Vagina (tissue), 2 donors: ENCODE measurements at regions of chr9 and their contacts with region 1.

Region 1: GRCh38 chr9:86948074-86948929 is 996 bp upstream of the GAS1 start:
- DNase-seq: no peak
- H3K4me3 ChIP-seq: peak overlapping the region; percentile 81 to 90
- H3K27ac ChIP-seq: peak overlapping the region; percentile 90
- H3K4me1 ChIP-seq: peaks cover 20% of the 10 kb centered on the region
- H3K27me3 ChIP-seq: no peaks in the 10 kb centered on the region
- CTCF ChIP-seq: peak in 2 of 3 experiments; percentile 46 to 79
- POLR2A ChIP-seq: no peak

Region 2: GRCh38 chr9:85662573-85662972 is 1285.7 kb before region 1 on chr9:
- intact Hi-C with region 1: no loop called
- DNase-seq: no peak
- H3K4me3 ChIP-seq: no peak overlapping the region
- H3K27ac ChIP-seq: no peak overlapping the region
- H3K4me1 ChIP-seq: no peaks in the 10 kb centered on the region
- H3K27me3 ChIP-seq: no peaks in the 10 kb centered on the region
- CTCF ChIP-seq: no peak
- POLR2A ChIP-seq: no peak

Region 3: GRCh38 chr9:86486891-86487837 is 461.1 kb before region 1 on chr9:
- intact Hi-C with region 1: loop called (anchors 10 kb)
- DNase-seq: no peak
- H3K4me3 ChIP-seq: no peak overlapping the region
- H3K27ac ChIP-seq: no peak overlapping the region
- H3K4me1 ChIP-seq: peaks cover 5% of the 10 kb centered on the region
- H3K27me3 ChIP-seq: no peaks in the 10 kb centered on the region
- CTCF ChIP-seq: peak; percentile 49 to 67 (median 60)
- POLR2A ChIP-seq: no peak

Region 4: DNA sequence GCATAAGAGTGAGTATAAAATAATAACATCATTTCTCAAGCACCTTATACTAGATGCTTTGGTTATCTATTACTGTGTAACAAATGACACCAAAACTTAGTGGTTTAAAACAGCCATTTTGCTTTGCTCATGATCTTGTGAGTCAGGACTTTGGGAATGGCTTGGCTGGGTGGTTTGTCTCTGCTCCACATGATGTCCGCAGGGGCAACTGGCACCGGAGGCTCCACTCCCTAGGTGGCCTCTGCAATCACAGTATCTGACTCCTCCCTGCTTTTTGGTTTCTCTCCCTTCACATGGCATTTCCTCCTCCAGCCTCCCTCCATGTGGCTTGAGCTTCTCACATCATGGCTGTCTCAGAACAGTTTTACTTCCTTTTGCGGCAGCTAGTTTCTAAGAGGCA is 260.5 kb before region 1 on chr9:
- intact Hi-C with region 1: no loop called
- DNase-seq: no peak
- H3K4me3 ChIP-seq: no peak overlapping the region
- H3K27ac ChIP-seq: no peak overlapping the region
- H3K4me1 ChIP-seq: peaks cover 7% of the 10 kb centered on the region
- H3K27me3 ChIP-seq: no peaks in the 10 kb centered on the region
- CTCF ChIP-seq: no peak
- POLR2A ChIP-seq: no peak

Region 5: GRCh38 chr9:86732514-86733171 is 215.7 kb before region 1 on chr9:
- intact Hi-C with region 1: loop called (anchors 5 kb)
- DNase-seq: peak in 1 of 2 donors; percentile 94
- H3K4me3 ChIP-seq: no peak overlapping the region
- H3K27ac ChIP-seq: peak overlapping the region; percentile 51
- H3K4me1 ChIP-seq: peaks cover 30% of the 10 kb centered on the region
- H3K27me3 ChIP-seq: no peaks in the 10 kb centered on the region
- CTCF ChIP-seq: no peak
- POLR2A ChIP-seq: no peak

Region 6: DNA sequence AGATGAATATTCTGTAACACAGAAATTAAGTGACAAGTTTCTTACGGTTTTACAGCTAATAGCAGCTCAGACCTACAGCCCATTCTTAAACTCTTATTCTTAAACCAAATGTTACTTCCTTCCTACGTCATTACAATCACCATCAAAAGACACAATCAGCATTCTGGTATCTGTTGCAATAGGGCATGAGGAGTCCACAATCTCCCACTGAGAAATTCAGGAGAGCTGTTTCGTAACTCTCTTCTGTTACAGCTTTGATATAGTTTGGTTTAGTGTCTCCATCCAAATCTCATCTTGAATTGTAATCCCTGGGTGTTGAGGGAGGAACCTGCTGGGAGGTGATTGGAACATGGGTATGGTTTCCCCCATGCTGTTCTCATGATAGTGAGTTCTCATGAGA is 164.4 kb before region 1 on chr9:
- intact Hi-C with region 1: no loop called
- DNase-seq: no peak
- H3K4me3 ChIP-seq: no peak overlapping the region
- H3K27ac ChIP-seq: no peak overlapping the region
- H3K4me1 ChIP-seq: no peaks in the 10 kb centered on the region
- H3K27me3 ChIP-seq: no peaks in the 10 kb centered on the region
- CTCF ChIP-seq: no peak
- POLR2A ChIP-seq: no peak

Region 7: DNA sequence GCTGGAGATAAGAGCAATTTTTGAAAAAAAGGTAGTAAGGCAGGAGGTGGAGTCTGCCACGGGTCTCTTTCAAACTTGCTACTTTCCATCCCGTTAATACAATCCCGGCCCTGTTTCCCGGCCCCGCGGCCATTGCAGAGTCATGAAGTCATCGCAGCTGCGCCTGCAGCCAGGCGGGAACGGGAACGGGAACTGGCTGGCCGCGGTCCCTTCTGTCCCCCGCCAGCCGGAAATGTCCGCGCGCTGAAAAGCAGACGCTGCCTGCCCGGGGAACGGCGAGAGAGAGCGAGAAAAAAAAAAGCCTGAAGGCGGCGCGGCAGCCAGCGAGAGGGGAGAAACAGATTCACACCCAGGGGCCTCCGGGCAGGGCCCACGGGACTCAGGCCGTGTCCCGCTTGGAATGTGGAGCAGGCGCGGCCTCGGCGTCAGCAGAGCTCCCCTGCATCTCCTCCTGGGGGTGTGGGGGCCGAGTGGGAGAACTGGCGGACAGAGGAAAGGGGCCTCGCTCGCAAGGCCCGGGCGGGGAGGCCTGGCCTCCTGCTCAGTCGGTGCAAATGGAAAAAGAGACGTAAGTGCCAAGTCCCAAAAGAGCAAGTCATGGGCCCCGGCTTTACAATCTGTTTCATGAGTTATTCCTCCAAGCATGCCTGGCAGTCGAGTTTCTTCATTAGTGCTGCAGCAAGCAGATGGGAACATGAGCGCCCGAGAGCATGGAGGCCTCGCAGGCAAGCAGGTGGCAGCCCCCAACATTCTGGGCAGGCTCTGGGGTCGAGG is 200.2 kb after region 1 on chr9:
- intact Hi-C with region 1: loop called (anchors 10 kb)
- DNase-seq: peak in 1 of 2 donors; percentile 91
- H3K4me3 ChIP-seq: peak overlapping the region; percentile 29 to 39
- H3K27ac ChIP-seq: peak overlapping the region; percentile 60
- H3K4me1 ChIP-seq: peaks cover 13% of the 10 kb centered on the region
- H3K27me3 ChIP-seq: no peaks in the 10 kb centered on the region
- CTCF ChIP-seq: no peak
- POLR2A ChIP-seq: no peak

Region 8: GRCh38 chr9:87324613-87325194 is 376.4 kb after region 1 on chr9:
- intact Hi-C with region 1: loop called (anchors 10 kb)
- DNase-seq: no peak
- H3K4me3 ChIP-seq: no peak overlapping the region
- H3K27ac ChIP-seq: no peak overlapping the region
- H3K4me1 ChIP-seq: no peaks in the 10 kb centered on the region
- H3K27me3 ChIP-seq: no peaks in the 10 kb centered on the region
- CTCF ChIP-seq: peak; percentile 52 to 90 (median 65)
- POLR2A ChIP-seq: no peak